Spleen (tissue), 13 donors: ENCODE measurements at regions of chrX and their contacts with region 1.

Region 1: DNA sequence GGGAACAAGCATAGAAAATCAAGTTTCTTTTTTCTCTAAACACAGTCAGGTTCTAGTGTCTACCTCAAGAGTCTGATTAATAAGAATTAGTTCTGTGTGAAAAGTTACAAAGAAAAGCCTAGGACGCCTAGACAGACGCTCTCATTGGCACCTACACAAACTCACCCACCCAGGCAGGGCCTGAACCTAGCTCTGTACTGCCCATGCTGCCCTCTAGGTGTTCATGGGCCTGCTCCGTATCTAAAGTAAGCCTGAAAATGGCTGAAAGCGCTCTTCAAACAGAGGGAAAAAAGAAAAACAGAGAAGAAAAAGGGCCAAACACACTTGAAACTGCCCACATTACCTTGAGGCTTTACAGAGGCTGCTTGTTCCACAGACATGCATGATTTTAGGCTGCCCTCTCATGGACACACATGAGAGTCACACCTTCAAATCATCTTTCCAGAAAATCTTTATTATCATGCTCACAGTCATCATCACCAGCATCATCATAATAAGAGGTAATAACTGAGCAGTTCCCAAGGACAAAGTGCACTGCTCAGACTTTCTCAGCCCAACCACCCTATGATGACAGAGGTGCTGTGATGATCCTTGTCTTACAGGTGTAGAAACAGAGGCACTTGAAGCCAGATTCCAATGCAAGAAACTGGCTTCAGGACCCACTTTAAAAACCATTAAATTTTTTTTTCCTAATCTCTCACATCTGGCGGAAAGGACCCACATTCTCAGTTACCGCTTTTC is 49.6 kb downstream of the MAP7D2 start:
- DNase-seq: no peak
- H3K4me3 ChIP-seq: no peak overlapping the region
- H3K27ac ChIP-seq: no peak overlapping the region
- H3K4me1 ChIP-seq: no peaks in the 10 kb centered on the region
- H3K27me3 ChIP-seq: no peaks in the 10 kb centered on the region
- CTCF ChIP-seq: peak in 8 of 11 experiments; percentile 13 to 48 (median 30)
- POLR2A ChIP-seq: no peak

Region 2: DNA sequence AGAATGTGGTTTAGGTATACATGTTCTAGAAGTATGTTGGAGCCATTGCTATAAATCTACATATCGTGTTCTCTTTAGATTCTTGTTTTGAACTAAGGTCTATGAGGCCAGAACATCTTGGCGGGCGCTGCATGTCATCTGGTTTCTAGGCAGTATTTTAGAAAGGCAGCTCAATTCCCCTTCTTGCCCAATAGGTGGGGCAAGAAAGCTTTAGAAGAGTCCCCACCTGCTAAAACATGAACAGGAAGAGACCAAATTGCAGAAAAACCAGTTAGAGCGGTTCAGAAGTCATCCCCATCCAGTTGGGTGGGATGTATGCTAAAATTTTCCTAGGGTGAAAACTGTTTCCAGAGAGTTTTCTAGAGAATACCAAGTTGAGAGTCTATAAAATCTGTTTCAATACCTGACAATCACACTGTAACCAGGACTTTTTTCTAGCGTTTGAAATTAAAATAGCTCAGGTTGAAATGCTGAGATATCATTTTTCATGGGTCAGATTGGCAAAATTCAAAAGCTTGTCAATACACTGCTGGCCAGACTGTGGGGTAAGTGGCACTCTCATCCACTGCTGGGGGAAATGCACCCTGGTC is 162.3 kb before region 1 on chrX:
- intact Hi-C with region 1: loop called (anchors 5 kb)
- DNase-seq: no peak
- H3K4me3 ChIP-seq: no peak overlapping the region
- H3K27ac ChIP-seq: no peak overlapping the region
- H3K4me1 ChIP-seq: no peaks in the 10 kb centered on the region
- H3K27me3 ChIP-seq: no peaks in the 10 kb centered on the region
- CTCF ChIP-seq: peak; percentile 35 to 69 (median 54)
- POLR2A ChIP-seq: no peak

Region 3: GRCh38 chrX:20011608-20012007 is 55.5 kb before region 1 on chrX:
- intact Hi-C with region 1: no loop called
- DNase-seq: no peak
- H3K4me3 ChIP-seq: no peak overlapping the region
- H3K27ac ChIP-seq: no peak overlapping the region
- H3K4me1 ChIP-seq: no peaks in the 10 kb centered on the region
- H3K27me3 ChIP-seq: no peaks in the 10 kb centered on the region
- CTCF ChIP-seq: no peak
- POLR2A ChIP-seq: no peak

Region 4: DNA sequence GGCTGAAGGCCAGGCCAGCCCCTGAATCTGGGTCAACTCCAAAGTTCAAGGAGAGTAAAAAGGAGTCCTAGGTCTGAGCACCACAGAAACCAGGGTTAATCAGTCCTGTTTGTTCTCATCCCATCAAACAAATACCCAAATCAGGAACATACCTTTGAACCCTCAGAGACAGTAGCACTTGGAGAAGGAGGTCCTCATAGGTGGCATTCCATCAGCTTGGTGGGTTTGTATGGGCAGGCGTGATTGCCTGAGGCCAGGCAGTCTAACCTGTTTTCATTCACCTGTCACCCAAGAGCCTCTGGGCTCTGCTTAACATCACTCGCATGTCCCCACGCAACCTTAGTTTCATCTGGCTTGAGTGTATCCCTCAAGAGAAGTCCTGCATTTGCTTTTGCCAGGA is 1754.7 kb after region 1 on chrX:
- intact Hi-C with region 1: no loop called
- DNase-seq: no peak
- H3K4me3 ChIP-seq: no peak overlapping the region
- H3K27ac ChIP-seq: no peak overlapping the region
- H3K4me1 ChIP-seq: no peaks in the 10 kb centered on the region
- H3K27me3 ChIP-seq: no peaks in the 10 kb centered on the region
- CTCF ChIP-seq: no peak
- POLR2A ChIP-seq: no peak